ENCODE measurements at regions of chr7 and their contacts with region 1.

Region 1: GRCh38 chr7:13860734-13861133 is 128.7 kb downstream of the ETV1 start:
- DNase-seq: peak; percentile 31

Region 2: GRCh38 chr7:13898967-13899670 is 38.4 kb after region 1 on chr7:
- in situ Hi-C with region 1: loop called (anchors 5 kb)
- DNase-seq: no peak

Measured in SK-MEL-5 (cell line).